Naive thymus-derived CD4-positive, alpha-beta T cell (primary cell): ENCODE measurements at regions of chr21 and their contacts with region 1.

Region 1: DNA sequence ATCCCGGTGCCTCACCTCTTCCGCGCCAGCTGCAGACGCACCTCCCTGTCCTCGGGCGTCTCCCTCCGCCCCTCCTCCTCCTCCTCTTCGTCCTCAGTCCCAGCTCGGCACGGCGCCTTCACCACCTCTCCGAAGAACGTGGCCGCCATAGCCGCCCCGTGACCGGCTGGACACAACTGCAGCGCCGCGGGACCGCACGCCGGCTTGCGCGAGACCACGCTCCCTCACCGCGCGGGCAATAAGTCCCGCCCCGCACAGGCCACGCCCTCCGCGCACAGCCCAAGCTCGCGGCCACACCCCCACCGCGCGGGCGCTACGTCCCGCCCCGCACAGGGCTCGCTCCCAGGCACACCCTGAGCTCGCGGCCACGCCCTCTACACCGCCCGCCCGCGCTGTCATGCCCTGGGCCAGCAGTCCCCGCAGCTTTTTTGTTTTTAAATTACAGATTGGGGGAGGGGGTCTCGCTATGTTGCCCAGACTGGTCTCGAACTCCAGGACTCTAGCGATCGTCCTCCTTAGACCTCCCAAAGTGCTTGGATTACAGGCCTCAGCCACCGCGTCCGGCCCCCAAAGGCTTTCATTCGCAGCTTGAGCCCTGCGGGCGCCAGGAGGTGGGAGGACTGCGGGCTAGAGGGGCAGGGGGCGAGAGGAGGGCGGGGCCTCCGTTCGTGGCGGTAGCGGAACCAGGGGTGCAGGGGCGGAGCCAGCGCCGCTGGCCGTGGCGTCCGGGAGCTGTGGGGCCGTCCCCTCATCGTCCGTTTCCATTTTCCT is at the start of gene PSMG1:
- DNase-seq: peak; percentile 89 to 96 (median 94)
- ATAC-seq: peak; percentile 99
- H3K4me3 ChIP-seq: peak within 1 kb of the TSS; percentile 86
- H3K4me3 Mint-ChIP-seq: peak within 1 kb of the TSS; percentile 92 to 100 (median 97)
- H3K27ac ChIP-seq: peak within 1 kb of the TSS; percentile 93
- H3K27ac Mint-ChIP-seq: peak within 1 kb of the TSS; percentile 88 to 98 (median 95)
- H3K4me1 ChIP-seq: peaks cover 9% of the 10 kb centered on the region in 2 donors
- H3K4me1 Mint-ChIP-seq: peaks cover 28 to 78% (median 52%) of the 10 kb centered on the region in 7 donors
- H3K27me3 ChIP-seq: no peaks in the 10 kb centered on the region
- H3K27me3 Mint-ChIP-seq: no peaks in the 10 kb centered on the region
- total RNA-seq, gene PSMG1: 9.8 to 62.5 (median 16.9) TPM

Region 2: GRCh38 chr21:38766987-38767722 is 416.3 kb before region 1 on chr21:
- CTCF ChIA-PET with region 1: interaction called, 4 read pairs
- POLR2A ChIA-PET with region 1: interaction called, 10 read pairs
- intact Hi-C with region 1: loop called (anchors 1 kb)
- DNase-seq: peak; percentile 21 to 85 (median 77)
- ATAC-seq: peak; percentile 93
- H3K4me3 ChIP-seq: peak overlapping the region; percentile 74
- H3K4me3 Mint-ChIP-seq: peak overlapping the region; percentile 76 to 98 (median 90)
- H3K27ac ChIP-seq: peak overlapping the region; percentile 67
- H3K27ac Mint-ChIP-seq: peak overlapping the region; percentile 93 to 99 (median 95)
- H3K4me1 ChIP-seq: peaks cover 24% of the 10 kb centered on the region in 2 donors
- H3K4me1 Mint-ChIP-seq: peaks cover 15 to 45% (median 35%) of the 10 kb centered on the region in 7 donors
- H3K27me3 ChIP-seq: no peaks in the 10 kb centered on the region
- H3K27me3 Mint-ChIP-seq: no peaks in the 10 kb centered on the region

Region 3: DNA sequence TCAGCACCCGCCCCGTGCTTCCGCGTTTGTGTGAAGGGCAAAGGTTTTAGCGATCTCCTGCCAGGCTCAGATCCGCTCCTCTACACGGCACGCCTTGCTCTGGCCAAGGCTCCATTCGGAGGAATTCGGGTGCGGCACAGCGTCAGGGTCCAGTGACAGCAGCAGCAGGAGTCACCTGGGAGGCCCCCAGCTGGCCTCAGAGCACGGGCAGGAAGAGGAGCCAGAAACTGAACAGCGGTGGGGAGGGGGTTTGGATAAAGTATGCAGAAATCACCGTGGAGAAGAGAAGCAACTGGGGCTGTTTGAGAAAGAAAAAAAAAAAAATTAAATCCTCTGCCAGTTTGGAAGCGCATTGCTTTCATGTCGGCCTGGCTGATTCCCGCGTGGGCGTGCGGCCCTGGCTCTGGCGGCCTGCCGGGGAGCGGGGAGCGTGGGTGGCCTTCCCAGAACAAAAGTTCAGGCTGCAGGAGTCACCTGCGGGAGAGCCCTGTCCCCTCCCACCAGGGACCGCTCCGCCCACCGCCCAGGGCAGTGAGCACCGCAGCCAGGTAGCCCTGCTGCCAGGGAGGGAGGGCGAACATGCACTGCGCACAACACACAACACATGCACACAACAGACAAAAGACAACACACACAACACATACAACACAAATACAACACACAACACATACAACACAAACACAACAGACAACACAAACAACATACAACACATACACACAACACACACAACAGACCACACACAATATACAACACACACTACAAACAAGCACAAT is 270.1 kb before region 1 on chr21:
- CTCF ChIA-PET with region 1: no interaction called
- POLR2A ChIA-PET with region 1: no interaction called
- intact Hi-C with region 1: no loop called
- DNase-seq: peak in 1 of 9 donors; percentile 2
- ATAC-seq: peak; percentile 34
- H3K4me3 ChIP-seq: no peak overlapping the region
- H3K4me3 Mint-ChIP-seq: peak overlapping the region in 2 of 10 donors; percentile 23 to 32
- H3K27ac ChIP-seq: no peak overlapping the region
- H3K27ac Mint-ChIP-seq: peak overlapping the region in 1 of 9 donors; percentile 51
- H3K4me1 ChIP-seq: no peaks in the 10 kb centered on the region
- H3K4me1 Mint-ChIP-seq: peaks cover 0 to 4% (median 0%) of the 10 kb centered on the region in 7 donors
- H3K27me3 ChIP-seq: no peaks in the 10 kb centered on the region
- H3K27me3 Mint-ChIP-seq: peaks cover 6 to 15% (median 12%) of the 10 kb centered on the region in 5 donors

Region 4: GRCh38 chr21:39114871-39115575 is 68.4 kb before region 1 on chr21:
- CTCF ChIA-PET with region 1: no interaction called
- POLR2A ChIA-PET with region 1: no interaction called
- intact Hi-C with region 1: no loop called
- DNase-seq: no peak
- ATAC-seq: no peak
- H3K4me3 ChIP-seq: no peak overlapping the region
- H3K4me3 Mint-ChIP-seq: no peak overlapping the region
- H3K27ac ChIP-seq: no peak overlapping the region
- H3K27ac Mint-ChIP-seq: no peak overlapping the region
- H3K4me1 ChIP-seq: no peaks in the 10 kb centered on the region
- H3K4me1 Mint-ChIP-seq: no peaks in the 10 kb centered on the region
- H3K27me3 ChIP-seq: no peaks in the 10 kb centered on the region
- H3K27me3 Mint-ChIP-seq: peaks cover 0 to 11% (median under 1%) of the 10 kb centered on the region in 5 donors

Region 5: DNA sequence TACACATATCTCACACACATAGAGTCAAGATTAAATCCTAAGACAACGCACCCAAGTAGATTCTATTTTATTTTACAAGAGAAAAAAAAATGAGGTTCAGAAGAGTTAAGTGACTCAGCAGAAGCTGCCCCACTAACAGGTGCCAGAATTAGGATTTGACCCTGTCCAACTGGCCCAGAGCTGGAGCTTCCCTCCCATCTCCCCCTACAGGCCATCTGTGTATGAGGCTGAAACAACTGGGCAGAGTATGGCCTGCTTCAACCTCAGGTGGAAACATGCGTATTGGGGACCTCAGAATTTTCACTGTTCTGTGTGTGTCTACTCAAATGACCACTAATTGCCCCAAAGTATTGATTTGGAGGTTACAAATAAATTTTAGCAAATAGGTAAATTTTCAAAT is 30.0 kb before region 1 on chr21:
- CTCF ChIA-PET with region 1: no interaction called
- POLR2A ChIA-PET with region 1: no interaction called
- intact Hi-C with region 1: no loop called
- DNase-seq: no peak
- ATAC-seq: no peak
- H3K4me3 ChIP-seq: no peak overlapping the region
- H3K4me3 Mint-ChIP-seq: no peak overlapping the region
- H3K27ac ChIP-seq: no peak overlapping the region
- H3K27ac Mint-ChIP-seq: no peak overlapping the region
- H3K4me1 ChIP-seq: no peaks in the 10 kb centered on the region
- H3K4me1 Mint-ChIP-seq: no peaks in the 10 kb centered on the region
- H3K27me3 ChIP-seq: no peaks in the 10 kb centered on the region
- H3K27me3 Mint-ChIP-seq: peaks cover 0 to 11% (median 4%) of the 10 kb centered on the region in 5 donors

Region 6: DNA sequence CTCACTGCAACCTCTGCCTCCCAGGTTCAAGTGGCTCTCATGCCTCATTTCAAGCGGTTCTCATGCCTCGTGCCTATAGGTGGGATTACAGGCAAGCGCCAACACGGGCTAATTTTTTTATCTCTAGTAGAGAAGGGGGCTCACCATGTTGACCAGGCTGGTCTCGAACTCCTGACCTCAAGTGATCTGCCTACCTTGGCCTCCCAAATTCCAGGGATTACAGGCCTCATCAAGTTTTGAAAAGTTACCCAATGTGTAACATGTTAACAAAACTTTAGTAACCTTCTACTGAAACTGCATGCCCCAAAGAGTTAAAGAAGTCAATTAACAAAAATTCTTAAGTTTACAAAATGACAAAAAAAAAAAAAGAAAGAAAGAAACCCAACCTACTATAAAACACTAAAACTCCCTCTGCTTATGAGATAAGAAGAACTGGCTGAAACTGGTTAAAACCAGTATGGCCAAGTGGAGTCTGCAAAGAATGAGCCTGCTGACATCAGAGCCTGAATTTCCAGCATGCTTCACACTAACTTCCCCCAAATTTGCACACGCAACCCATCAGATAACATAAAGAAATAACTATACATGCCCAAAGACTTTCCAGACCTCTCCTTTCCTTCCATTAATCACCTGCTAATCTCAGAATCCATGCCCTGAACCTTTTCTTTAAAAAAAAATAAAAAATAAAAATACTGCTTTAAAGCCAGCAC is 25.4 kb after region 1 on chr21:
- CTCF ChIA-PET with region 1: no interaction called
- POLR2A ChIA-PET with region 1: no interaction called
- intact Hi-C with region 1: loop called in 1 of 2 experiments (anchors 2 kb)
- DNase-seq: peak in 3 of 9 donors; percentile 21 to 27 (median 24)
- ATAC-seq: no peak
- H3K4me3 ChIP-seq: no peak overlapping the region
- H3K4me3 Mint-ChIP-seq: peak overlapping the region in 6 of 10 donors; percentile 10 to 57 (median 36)
- H3K27ac ChIP-seq: no peak overlapping the region
- H3K27ac Mint-ChIP-seq: peak overlapping the region; percentile 36 to 87 (median 64)
- H3K4me1 ChIP-seq: peaks cover 0 to 5% of the 10 kb centered on the region in 2 donors
- H3K4me1 Mint-ChIP-seq: peaks cover 8 to 51% (median 42%) of the 10 kb centered on the region in 7 donors
- H3K27me3 ChIP-seq: no peaks in the 10 kb centered on the region
- H3K27me3 Mint-ChIP-seq: no peaks in the 10 kb centered on the region

Region 7: GRCh38 chr21:39313571-39314142 is 130.2 kb after region 1 on chr21 and contains the start of gene BRWD1:
- CTCF ChIA-PET with region 1: no interaction called
- POLR2A ChIA-PET with region 1: interaction called, 15 read pairs
- intact Hi-C with region 1: loop called (anchors 1 kb)
- DNase-seq: peak; percentile 73 to 90 (median 84)
- ATAC-seq: peak; percentile 71
- H3K4me3 ChIP-seq: peak within 1 kb of the TSS; percentile 88
- H3K4me3 Mint-ChIP-seq: peak within 1 kb of the TSS; percentile 91 to 97 (median 94)
- H3K27ac ChIP-seq: peak within 1 kb of the TSS; percentile 92
- H3K27ac Mint-ChIP-seq: peak within 1 kb of the TSS; percentile 89 to 98 (median 94)
- H3K4me1 ChIP-seq: peaks cover 11% of the 10 kb centered on the region in 2 donors
- H3K4me1 Mint-ChIP-seq: peaks cover 28 to 51% (median 45%) of the 10 kb centered on the region in 7 donors
- H3K27me3 ChIP-seq: no peaks in the 10 kb centered on the region
- H3K27me3 Mint-ChIP-seq: no peaks in the 10 kb centered on the region
- total RNA-seq, gene BRWD1: 41.1 to 108 (median 83.9) TPM

Region 8: DNA sequence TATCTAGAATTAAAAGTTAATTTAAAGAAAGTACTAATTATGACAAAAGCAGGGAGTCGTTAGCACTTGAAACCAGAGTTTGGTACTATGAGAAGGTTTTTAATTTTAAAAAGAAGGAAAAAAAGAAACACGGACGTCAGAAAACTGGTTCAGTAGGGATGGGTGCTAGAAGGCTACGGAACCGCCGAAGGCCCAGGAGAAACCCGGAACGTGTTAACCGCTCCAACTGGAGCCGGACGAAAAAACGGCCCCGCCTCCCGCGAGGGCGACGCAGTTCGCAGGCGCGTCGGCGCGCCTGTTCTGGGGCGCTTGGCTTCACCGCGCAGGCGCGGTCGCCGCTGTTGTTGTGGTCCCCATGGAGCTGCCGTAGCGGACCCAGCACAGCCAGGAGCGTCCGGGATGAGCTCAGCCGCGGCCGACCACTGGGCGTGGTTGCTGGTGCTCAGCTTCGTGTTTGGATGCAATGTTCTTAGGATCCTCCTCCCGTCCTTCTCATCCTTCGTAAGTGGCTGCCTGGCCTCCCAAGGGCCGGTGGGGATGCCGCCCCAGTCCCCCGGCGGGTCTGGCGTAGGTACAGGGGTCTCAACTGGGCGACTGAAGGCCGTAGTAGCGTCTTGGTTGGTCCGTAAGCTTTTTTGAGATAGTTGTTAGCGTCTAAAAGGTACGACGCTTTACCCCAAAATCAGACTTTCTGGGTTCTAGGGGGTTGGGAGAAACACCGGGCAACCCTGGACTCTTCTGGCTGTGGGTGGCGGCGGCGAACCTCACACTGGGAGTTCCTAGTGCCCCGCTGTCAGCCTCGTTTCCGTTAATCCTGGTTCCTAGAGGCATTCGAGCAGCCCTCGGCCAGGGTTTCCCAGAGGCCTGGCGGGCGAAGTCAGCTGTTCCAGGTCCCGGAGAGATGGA is 196.8 kb after region 1 on chr21:
- CTCF ChIA-PET with region 1: interaction called, 3 read pairs
- POLR2A ChIA-PET with region 1: no interaction called
- intact Hi-C with region 1: loop called in 1 of 2 experiments (anchors 1 kb)
- DNase-seq: peak; percentile 76 to 91 (median 83)
- ATAC-seq: peak; percentile 99
- H3K4me3 ChIP-seq: peak overlapping the region; percentile 95
- H3K4me3 Mint-ChIP-seq: peak overlapping the region; percentile 88 to 95 (median 92)
- H3K27ac ChIP-seq: peak overlapping the region; percentile 84
- H3K27ac Mint-ChIP-seq: peak overlapping the region; percentile 33 to 95 (median 93)
- H3K4me1 ChIP-seq: peaks cover 7 to 10% of the 10 kb centered on the region in 2 donors
- H3K4me1 Mint-ChIP-seq: peaks cover 8 to 31% (median 24%) of the 10 kb centered on the region in 7 donors
- H3K27me3 ChIP-seq: no peaks in the 10 kb centered on the region
- H3K27me3 Mint-ChIP-seq: peaks cover 0 to 5% (median 4%) of the 10 kb centered on the region in 5 donors

Region 9: DNA sequence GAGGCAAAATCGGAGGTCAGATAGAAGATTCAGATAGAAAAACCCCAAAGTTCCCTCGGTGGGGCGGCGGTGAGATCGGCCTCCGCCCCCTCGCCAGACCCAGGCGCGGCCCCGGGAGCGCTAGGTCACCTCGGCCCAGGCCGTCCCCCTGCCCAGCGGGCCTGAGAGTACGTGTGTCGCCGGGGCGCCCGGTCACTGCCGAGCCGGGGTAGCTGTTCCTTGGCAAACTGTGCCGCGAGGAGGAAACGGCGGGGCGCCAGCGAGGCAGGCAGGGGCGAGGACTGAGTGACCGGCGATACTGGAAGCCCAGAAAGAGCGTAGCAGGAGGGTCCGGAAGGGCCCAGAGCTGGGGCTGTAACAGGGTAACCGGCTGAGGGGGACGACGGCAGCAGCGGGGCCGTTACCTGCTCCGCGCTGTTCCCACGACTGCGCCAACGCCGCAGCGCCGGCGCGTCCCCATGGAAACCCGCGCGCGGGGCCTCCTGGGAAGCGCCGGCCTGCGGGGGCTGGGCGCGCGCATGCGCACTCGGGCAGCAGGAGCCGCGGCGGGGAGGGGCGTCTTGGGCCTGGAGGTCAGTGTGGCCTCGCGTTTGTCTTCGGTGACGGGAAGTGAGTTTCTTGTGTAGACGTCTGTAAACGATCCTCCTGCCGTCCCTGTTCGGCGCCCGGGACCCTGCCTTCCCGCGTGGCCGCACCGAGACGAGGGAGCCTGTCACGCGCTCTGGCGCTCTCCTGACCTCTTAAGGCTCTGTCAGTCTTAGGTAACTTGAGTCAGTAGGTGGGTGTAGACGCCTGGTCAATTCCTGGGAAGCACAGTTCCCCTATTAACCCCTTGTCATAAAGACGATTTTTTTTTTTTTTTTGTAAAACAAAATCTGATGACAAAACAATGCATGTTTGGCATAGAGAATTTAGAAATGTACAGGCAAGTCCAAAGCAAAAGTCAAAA is 262.2 kb after region 1 on chr21 and contains the start of gene LCA5L:
- CTCF ChIA-PET with region 1: no interaction called
- POLR2A ChIA-PET with region 1: no interaction called
- intact Hi-C with region 1: loop called (anchors 1 to 2 kb)
- DNase-seq: peak; percentile 80 to 96 (median 90)
- ATAC-seq: peak; percentile 93
- H3K4me3 ChIP-seq: peak within 1 kb of the TSS; percentile 83
- H3K4me3 Mint-ChIP-seq: peak within 1 kb of the TSS; percentile 91 to 99 (median 94)
- H3K27ac ChIP-seq: peak within 1 kb of the TSS; percentile 76
- H3K27ac Mint-ChIP-seq: peak within 1 kb of the TSS; percentile 86 to 98 (median 94)
- H3K4me1 ChIP-seq: peaks cover 11 to 13% of the 10 kb centered on the region in 2 donors
- H3K4me1 Mint-ChIP-seq: peaks cover 8 to 26% (median 14%) of the 10 kb centered on the region in 7 donors
- H3K27me3 ChIP-seq: peaks cover 0 to 2% of the 10 kb centered on the region in 2 donors
- H3K27me3 Mint-ChIP-seq: peaks cover 0 to 44% (median 14%) of the 10 kb centered on the region in 5 donors
- total RNA-seq, gene LCA5L: not detected

Region 10: GRCh38 chr21:39675993-39676661 is 492.7 kb after region 1 on chr21:
- CTCF ChIA-PET with region 1: no interaction called
- POLR2A ChIA-PET with region 1: no interaction called
- intact Hi-C with region 1: no loop called
- DNase-seq: no peak
- ATAC-seq: no peak
- H3K4me3 ChIP-seq: no peak overlapping the region
- H3K4me3 Mint-ChIP-seq: no peak overlapping the region
- H3K27ac ChIP-seq: no peak overlapping the region
- H3K27ac Mint-ChIP-seq: no peak overlapping the region
- H3K4me1 ChIP-seq: no peaks in the 10 kb centered on the region
- H3K4me1 Mint-ChIP-seq: no peaks in the 10 kb centered on the region
- H3K27me3 ChIP-seq: no peaks in the 10 kb centered on the region
- H3K27me3 Mint-ChIP-seq: peaks cover 0 to 35% (median 10%) of the 10 kb centered on the region in 5 donors